GM12878 (cell line): ENCODE measurements at regions of chr5 and their contacts with region 1.

Region 1: GRCh38 chr5:71482132-71482531 is 26.7 kb downstream of the BDP1 start:
- DNase-seq: no peak
- ATAC-seq: no peak
- H3K4me3 ChIP-seq: no peak overlapping the region
- H3K27ac ChIP-seq: no peak overlapping the region
- H3K4me1 ChIP-seq: no peaks in the 10 kb centered on the region
- H3K27me3 ChIP-seq: no peaks in the 10 kb centered on the region
- CTCF ChIP-seq: no peak
- EP300 ChIP-seq: no peak
- POLR2A ChIP-seq: no peak
- RAD21 ChIP-seq: no peak

Region 2: DNA sequence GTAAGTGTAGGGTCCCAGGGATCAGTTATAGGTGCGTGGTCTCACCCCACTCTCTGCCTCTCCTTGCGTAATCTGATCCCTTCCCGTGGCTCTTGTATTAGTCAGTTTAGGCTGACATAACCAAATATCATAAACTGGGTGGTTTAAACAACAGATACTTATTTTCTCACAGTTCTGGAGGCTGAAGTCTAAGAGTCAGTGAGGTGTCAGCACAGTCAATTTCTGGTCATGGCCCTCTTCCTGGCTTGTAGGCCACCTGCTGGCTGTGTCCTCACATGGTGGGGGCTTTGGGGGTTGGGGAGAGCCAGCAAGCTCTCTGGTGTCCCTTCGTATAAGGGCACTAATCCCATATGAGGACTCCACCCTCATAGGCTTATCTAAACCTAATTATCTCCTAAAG is 269.3 kb after region 1 on chr5:
- CTCF ChIA-PET with region 1: no interaction called
- POLR2A ChIA-PET with region 1: no interaction called
- RAD21 ChIA-PET with region 1: interaction called, 11 read pairs
- SMC1A ChIA-PET with region 1: no interaction called
- in situ Hi-C with region 1: loop called (anchors 5 kb)
- intact Hi-C with region 1: no loop called
- DNase-seq: no peak
- ATAC-seq: 0 out of 3 replicates have a peak, but pooled peaks have one; percentile 30
- H3K4me3 ChIP-seq: no peak overlapping the region
- H3K27ac ChIP-seq: no peak overlapping the region
- H3K4me1 ChIP-seq: no peaks in the 10 kb centered on the region
- H3K27me3 ChIP-seq: no peaks in the 10 kb centered on the region
- CTCF ChIP-seq: no peak
- EP300 ChIP-seq: no peak
- POLR2A ChIP-seq: no peak
- RAD21 ChIP-seq: no peak